Right lobe of liver (tissue), 6 donors: ENCODE measurements at regions of chr15 and their contacts with region 1.

Region 1: GRCh38 chr15:101391981-101392640 is 97.1 kb upstream of the SNRPA1 start:
- DNase-seq: peak in 1 of 3 donors; percentile 10
- ATAC-seq: no peak
- H3K4me3 ChIP-seq: no peak overlapping the region
- H3K27ac ChIP-seq: no peak overlapping the region
- H3K4me1 ChIP-seq: no peaks in the 10 kb centered on the region
- H3K27me3 ChIP-seq: no peaks in the 10 kb centered on the region
- CTCF ChIP-seq: no peak
- POLR2A ChIP-seq: no peak

Region 2: GRCh38 chr15:101489236-101489632 is 97.1 kb after region 1 on chr15:
- intact Hi-C with region 1: loop called in 1 of 2 experiments (anchors 10 kb)
- DNase-seq: peak in 2 of 3 donors; percentile 57 to 72
- ATAC-seq: peak; percentile 10 to 59 (median 32)
- H3K4me3 ChIP-seq: peak overlapping the region; percentile 32 to 73 (median 69)
- H3K27ac ChIP-seq: peak overlapping the region in 2 of 3 donors; percentile 94 to 95
- H3K4me1 ChIP-seq: peaks cover 0 to 8% (median 0%) of the 10 kb centered on the region in 4 donors
- H3K27me3 ChIP-seq: no peaks in the 10 kb centered on the region
- CTCF ChIP-seq: peak in 1 of 4 donors; percentile 12
- POLR2A ChIP-seq: no peak